ENCODE measurements at regions of chr17 and their contacts with region 1.

Region 1: GRCh38 chr17:49952209-49952911 is 16.6 kb upstream of the DLX4 start:
- DNase-seq: peak; percentile 95
- ATAC-seq: peak; percentile 94
- H3K4me3 Mint-ChIP-seq: no peak overlapping the region
- H3K27ac Mint-ChIP-seq: no peak overlapping the region
- H3K4me1 Mint-ChIP-seq: peaks cover 10% of the 10 kb centered on the region
- H3K27me3 Mint-ChIP-seq: peaks cover 26% of the 10 kb centered on the region
- CTCF ChIP-seq: peak; percentile 72

Region 2: DNA sequence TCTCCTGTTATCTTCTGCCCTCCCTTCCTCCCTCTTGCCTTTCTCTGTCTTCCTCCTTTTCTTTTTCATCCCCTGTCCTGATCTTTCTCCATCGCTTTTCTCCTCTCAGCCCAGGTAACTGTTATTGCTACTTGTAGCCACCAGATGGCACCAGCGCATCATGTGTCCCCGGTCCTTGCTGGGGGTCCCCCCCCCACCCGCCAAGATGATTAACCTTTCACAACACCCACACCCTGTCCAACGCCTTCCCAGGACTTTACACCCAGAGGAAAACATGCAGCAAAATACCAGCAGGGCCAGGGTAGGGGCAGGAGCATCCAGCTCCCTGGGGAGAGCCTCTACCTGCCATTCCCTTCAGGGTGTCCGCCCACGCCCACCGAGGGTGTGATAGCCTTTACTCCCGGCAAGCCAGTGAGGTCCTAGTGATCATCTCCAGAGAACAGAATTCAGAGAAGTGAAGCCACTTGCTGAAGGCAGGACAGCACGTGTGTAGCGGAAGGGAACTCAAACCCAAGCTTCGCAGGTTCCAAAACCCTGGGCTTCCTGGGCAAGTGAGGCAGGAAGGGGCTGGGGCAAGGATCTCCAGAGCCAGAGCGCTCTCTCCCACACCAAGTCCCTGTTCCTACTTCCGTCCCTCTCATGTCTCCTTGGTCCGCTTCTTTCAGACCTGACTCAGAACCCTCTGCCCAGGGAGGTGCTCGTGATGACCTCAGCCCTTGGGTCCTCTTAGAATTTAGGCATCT is 91.0 kb before region 1 on chr17:
- CTCF ChIA-PET with region 1: interaction called, 22 read pairs
- POLR2A ChIA-PET with region 1: no interaction called
- DNase-seq: no peak
- ATAC-seq: no peak
- H3K4me3 Mint-ChIP-seq: no peak overlapping the region
- H3K27ac Mint-ChIP-seq: no peak overlapping the region
- H3K4me1 Mint-ChIP-seq: peaks cover 41% of the 10 kb centered on the region
- H3K27me3 Mint-ChIP-seq: peaks cover 2% of the 10 kb centered on the region; the same call in 1 of the 2 replicates
- CTCF ChIP-seq: peak; percentile 80

Region 3: GRCh38 chr17:49880291-49881053 is 71.9 kb before region 1 on chr17:
- CTCF ChIA-PET with region 1: interaction called, 18 read pairs
- POLR2A ChIA-PET with region 1: interaction called, 3 read pairs
- DNase-seq: peak; percentile 96
- ATAC-seq: peak; percentile 89
- H3K4me3 Mint-ChIP-seq: peak overlapping the region; percentile 71
- H3K27ac Mint-ChIP-seq: no peak overlapping the region
- H3K4me1 Mint-ChIP-seq: peaks cover 30% of the 10 kb centered on the region
- H3K27me3 Mint-ChIP-seq: peaks cover 28% of the 10 kb centered on the region
- CTCF ChIP-seq: peak; percentile 96

Region 4: DNA sequence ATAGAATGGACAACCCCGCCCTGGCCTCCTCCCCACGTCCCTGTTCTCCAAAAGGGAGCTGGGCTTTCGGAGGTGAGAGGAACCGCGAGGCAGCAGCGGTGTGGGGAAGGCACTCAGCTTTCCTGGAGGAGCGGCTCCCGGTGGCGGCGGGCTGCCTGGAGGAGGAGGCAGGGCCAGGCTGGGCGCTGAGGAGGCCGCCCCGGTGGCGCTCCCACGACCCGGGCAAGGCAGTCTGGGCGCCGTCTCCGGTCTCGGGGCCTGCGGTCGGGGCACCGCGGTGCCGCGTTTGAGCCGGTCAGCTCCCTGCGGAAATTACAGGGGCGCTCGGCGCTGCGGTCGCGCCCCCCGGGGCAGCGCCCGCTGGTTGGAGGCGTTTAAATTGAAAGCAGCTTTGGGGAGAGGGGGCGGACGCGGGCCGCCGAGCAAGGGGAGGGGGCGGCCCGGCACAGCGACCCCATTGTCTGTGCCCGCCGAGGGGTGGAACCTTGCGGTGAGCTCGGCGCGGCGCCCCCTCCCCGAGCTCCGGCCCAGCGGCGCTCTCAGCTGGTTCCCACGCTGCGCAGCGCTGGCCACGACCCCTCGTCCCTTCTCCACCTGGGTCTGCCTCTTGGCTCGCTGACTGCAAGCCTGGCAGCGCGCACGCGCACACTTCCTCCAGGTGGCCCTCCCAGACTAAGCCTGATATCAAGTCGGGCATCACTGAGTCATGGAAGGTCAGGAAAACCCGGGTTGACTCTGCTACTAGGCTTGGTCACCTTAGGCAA is 42.1 kb before region 1 on chr17:
- CTCF ChIA-PET with region 1: interaction called, 30 read pairs
- POLR2A ChIA-PET with region 1: no interaction called
- DNase-seq: peak; percentile 68
- ATAC-seq: peak; percentile 71
- H3K4me3 Mint-ChIP-seq: peak overlapping the region; percentile 81
- H3K27ac Mint-ChIP-seq: no peak overlapping the region
- H3K4me1 Mint-ChIP-seq: peaks cover 26% of the 10 kb centered on the region
- H3K27me3 Mint-ChIP-seq: peaks cover 84% of the 10 kb centered on the region
- CTCF ChIP-seq: no peak

Region 5: DNA sequence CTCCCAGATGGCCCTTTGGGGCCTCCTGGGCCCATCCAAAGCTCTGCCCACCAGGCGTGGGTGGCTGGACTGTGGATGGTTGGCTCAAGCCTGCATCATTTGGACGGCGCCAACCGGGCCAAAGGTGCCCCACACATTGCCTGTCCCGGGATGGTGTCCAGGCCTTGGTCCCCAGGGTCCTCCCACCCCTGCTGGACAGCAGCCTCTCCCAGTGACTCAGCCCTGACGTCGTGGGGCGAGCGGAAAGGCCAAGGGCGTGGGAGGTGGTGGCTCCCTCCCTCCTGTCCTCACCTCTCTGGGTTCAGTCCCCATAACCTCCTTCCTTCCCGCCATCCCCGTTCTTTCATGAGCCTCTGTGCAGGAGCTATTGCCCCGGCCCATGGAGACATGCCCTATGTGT is 25.5 kb before region 1 on chr17:
- CTCF ChIA-PET with region 1: interaction called, 11 read pairs
- POLR2A ChIA-PET with region 1: no interaction called
- DNase-seq: no peak
- ATAC-seq: no peak
- H3K4me3 Mint-ChIP-seq: no peak overlapping the region
- H3K27ac Mint-ChIP-seq: no peak overlapping the region
- H3K4me1 Mint-ChIP-seq: no peaks in the 10 kb centered on the region
- H3K27me3 Mint-ChIP-seq: peaks cover 2% of the 10 kb centered on the region; the same call in 1 of the 2 replicates
- CTCF ChIP-seq: no peak

Region 6: DNA sequence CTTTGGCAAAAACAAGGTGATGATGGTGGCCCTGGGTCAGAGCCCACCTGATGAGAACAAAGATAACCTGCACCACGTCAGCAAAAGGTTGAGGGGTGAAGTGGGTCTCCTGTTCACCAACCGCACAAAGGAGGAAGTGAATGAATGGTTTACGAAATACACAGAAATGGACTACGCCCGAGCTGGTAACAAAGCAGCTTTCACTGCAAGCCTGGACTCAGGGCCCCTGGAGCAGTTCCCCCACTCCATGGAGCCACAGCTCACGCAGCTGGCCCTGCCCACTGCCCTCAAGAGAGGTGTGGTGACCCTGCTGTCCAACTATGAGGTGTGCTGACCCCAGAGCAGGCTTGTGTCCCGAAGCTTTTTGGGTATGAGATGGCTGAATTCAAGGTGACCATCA is 13.0 kb before region 1 on chr17:
- CTCF ChIA-PET with region 1: interaction called, 53 read pairs
- POLR2A ChIA-PET with region 1: no interaction called
- DNase-seq: no peak
- ATAC-seq: no peak
- H3K4me3 Mint-ChIP-seq: no peak overlapping the region
- H3K27ac Mint-ChIP-seq: no peak overlapping the region
- H3K4me1 Mint-ChIP-seq: peaks cover 12% of the 10 kb centered on the region
- H3K27me3 Mint-ChIP-seq: peaks cover 31% of the 10 kb centered on the region
- CTCF ChIP-seq: no peak

Region 7: DNA sequence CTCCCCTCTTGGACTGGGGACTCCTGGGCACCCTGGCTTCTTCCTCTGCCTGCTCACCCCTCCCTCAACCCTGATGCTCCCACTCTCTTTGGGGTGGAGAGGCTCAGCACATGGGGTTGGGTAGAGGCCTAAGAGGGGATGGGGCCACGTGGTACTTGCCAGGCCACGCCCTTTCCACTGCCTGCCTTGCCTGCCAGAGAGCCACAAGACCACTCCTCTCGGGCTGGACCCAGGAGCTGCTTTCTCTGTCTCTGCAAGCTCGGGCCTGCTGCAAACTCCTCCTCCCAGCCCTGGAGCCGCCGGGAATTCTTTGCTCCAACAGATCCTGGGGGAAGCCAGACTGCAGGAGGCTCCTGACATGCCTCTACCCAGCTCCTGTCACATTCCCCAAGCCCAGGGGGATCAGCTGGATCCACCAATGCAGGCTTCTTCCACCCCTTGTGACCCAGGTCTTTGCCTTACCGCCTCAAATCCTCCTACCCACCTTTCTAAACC is 28.4 kb after region 1 on chr17:
- CTCF ChIA-PET with region 1: interaction called, 73 read pairs
- POLR2A ChIA-PET with region 1: no interaction called
- DNase-seq: peak; percentile 85
- ATAC-seq: peak; percentile 95
- H3K4me3 Mint-ChIP-seq: no peak overlapping the region
- H3K27ac Mint-ChIP-seq: no peak overlapping the region
- H3K4me1 Mint-ChIP-seq: peaks cover 45% of the 10 kb centered on the region
- H3K27me3 Mint-ChIP-seq: peaks cover 91% of the 10 kb centered on the region
- CTCF ChIP-seq: no peak